ENCODE measurements at regions of chr16 and their contacts with region 1.

Region 1: DNA sequence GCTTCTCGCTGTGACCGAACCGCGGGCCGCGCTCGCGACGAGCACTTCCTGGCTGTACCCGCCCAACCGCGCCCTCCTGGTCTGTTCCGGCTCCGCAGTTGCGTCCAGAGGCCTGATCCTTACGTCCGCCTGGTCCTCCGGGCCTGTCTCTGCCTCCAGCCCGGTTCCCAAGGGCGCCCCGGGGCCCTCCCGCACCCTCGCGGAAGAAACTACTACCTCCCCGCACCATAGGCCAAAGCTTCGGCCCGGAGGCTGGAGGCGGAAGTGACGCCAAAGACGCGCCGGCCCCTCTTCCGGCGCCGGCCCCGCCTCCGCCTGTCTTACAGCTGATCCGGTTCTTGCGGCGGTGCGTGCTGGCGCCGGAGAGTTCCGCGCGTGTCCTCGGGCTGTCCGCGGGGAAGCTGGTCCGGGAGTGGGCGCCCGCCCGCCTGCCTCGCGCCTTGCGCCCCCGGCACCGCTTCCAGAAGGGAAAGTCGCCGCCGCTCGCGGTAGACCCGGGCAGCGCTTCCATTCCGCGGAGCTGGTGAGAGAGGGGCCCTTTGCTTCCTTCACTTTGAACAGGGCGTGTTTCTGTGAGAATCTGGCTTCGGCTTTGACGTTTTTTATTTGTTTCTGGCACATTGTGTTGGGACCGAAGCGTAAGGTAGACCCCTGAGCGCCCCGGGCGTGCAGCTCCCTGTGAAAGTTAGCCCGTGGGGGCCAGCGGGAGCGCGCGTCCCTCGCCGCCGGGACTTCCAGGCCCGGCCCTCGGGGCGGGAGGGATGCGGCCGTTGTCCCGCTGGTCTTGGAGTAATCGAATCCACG is at the start of gene ZNF778:
- DNase-seq: peak; percentile 91
- H3K4me3 ChIP-seq: peak within 1 kb of the TSS; percentile 69 to 99 (median 86)
- H3K27ac ChIP-seq: peak within 1 kb of the TSS; percentile 96 to 98 (median 96)
- H3K4me1 ChIP-seq: peaks cover 0 to 33% (median 31%) of the 10 kb centered on the region in 4 donors
- H3K27me3 ChIP-seq: no peaks in the 10 kb centered on the region
- CTCF ChIP-seq: no peak
- EP300 ChIP-seq: no peak
- POLR2A ChIP-seq: peak; percentile 32 to 66
- total RNA-seq, gene ZNF778: 6.4 to 21.8 (median 12.6) TPM

Region 2: GRCh38 chr16:87950765-87951549 is 1266.6 kb before region 1 on chr16 and contains the start of gene BANP:
- intact Hi-C with region 1: loop called (anchors 10 kb)
- DNase-seq: peak; percentile 99
- H3K4me3 ChIP-seq: peak within 1 kb of the TSS; percentile 83 to 99 (median 95)
- H3K27ac ChIP-seq: peak within 1 kb of the TSS; percentile 94 to 100 (median 97)
- H3K4me1 ChIP-seq: peaks cover 0 to 44% (median 25%) of the 10 kb centered on the region in 4 donors
- H3K27me3 ChIP-seq: no peaks in the 10 kb centered on the region
- CTCF ChIP-seq: peak in 3 of 4 experiments; percentile 29 to 37 (median 36)
- EP300 ChIP-seq: no peak
- POLR2A ChIP-seq: no peak
- total RNA-seq, gene BANP: 17.4 to 31.0 (median 23.0) TPM

Region 3: DNA sequence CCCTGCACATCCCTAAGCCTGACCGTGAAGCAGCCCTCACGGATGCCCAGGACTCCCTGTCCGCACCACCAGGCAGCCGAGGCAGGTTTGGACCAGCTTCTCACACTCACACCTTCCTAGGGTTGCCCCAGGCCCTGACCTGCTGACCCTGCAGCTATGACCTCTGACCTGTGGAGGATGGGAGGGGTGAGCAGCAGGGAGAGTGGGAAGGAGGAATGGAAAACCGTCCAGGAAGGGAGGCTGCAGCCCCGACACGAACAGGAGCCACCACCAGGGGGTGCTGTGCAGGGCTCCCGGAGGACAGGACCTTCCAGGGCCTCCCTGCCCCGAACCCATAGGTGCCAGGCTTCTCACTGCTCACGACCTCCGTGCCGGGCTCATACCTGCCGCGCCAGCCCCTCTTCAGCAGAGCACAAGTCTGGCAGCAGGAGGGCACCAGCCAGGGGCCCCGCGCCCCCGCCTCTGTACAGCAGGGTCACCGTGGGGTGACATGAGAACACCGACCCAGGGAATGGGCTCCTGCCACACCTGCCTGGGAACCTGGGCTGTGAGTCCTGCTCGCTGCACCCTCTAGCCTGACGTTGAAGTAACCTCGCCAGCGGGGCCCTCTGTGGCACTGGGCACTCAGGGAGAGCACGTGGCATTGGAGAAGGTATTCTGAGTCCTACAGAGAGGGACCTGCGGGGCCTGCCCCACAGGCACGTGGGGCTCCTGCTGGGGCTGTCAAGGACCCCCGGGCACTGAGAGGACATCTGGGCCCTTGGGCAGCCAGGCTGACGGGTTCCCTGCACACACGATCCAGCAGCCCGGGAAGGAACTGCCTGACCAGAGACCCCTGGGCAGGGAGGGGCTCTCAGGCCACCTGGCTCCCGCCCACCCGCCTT is 473.7 kb before region 1 on chr16:
- intact Hi-C with region 1: loop called (anchors 10 kb)
- DNase-seq: peak; percentile 91
- H3K4me3 ChIP-seq: no peak overlapping the region
- H3K27ac ChIP-seq: peak overlapping the region; percentile 38 to 87 (median 82)
- H3K4me1 ChIP-seq: peaks cover 0 to 52% (median 43%) of the 10 kb centered on the region in 4 donors
- H3K27me3 ChIP-seq: no peaks in the 10 kb centered on the region
- CTCF ChIP-seq: peak; percentile 85 to 95 (median 92)
- EP300 ChIP-seq: no peak
- POLR2A ChIP-seq: no peak

Region 4: GRCh38 chr16:88838991-88839529 is 378.5 kb before region 1 on chr16:
- intact Hi-C with region 1: no loop called
- DNase-seq: no peak
- H3K4me3 ChIP-seq: no peak overlapping the region
- H3K27ac ChIP-seq: no peak overlapping the region
- H3K4me1 ChIP-seq: no peaks in the 10 kb centered on the region
- H3K27me3 ChIP-seq: no peaks in the 10 kb centered on the region
- CTCF ChIP-seq: no peak
- EP300 ChIP-seq: no peak
- POLR2A ChIP-seq: no peak

Region 5: GRCh38 chr16:88856828-88857733 is 360.5 kb before region 1 on chr16 and contains the starts of genes GALNS and TRAPPC2L:
- intact Hi-C with region 1: loop called (anchors 5 kb)
- DNase-seq: peak; percentile 99
- H3K4me3 ChIP-seq: peak within 1 kb of the TSS; percentile 70 to 95 (median 80)
- H3K27ac ChIP-seq: peak within 1 kb of the TSS; percentile 77 to 88 (median 82)
- H3K4me1 ChIP-seq: peaks cover 0 to 27% (median 20%) of the 10 kb centered on the region in 4 donors
- H3K27me3 ChIP-seq: no peaks in the 10 kb centered on the region
- CTCF ChIP-seq: no peak
- EP300 ChIP-seq: no peak
- POLR2A ChIP-seq: peak; percentile 25 to 65
- total RNA-seq, gene GALNS: 6.7 to 50.4 (median 11.4) TPM
- total RNA-seq, gene TRAPPC2L: 30.7 to 42.1 (median 39.3) TPM

Region 6: DNA sequence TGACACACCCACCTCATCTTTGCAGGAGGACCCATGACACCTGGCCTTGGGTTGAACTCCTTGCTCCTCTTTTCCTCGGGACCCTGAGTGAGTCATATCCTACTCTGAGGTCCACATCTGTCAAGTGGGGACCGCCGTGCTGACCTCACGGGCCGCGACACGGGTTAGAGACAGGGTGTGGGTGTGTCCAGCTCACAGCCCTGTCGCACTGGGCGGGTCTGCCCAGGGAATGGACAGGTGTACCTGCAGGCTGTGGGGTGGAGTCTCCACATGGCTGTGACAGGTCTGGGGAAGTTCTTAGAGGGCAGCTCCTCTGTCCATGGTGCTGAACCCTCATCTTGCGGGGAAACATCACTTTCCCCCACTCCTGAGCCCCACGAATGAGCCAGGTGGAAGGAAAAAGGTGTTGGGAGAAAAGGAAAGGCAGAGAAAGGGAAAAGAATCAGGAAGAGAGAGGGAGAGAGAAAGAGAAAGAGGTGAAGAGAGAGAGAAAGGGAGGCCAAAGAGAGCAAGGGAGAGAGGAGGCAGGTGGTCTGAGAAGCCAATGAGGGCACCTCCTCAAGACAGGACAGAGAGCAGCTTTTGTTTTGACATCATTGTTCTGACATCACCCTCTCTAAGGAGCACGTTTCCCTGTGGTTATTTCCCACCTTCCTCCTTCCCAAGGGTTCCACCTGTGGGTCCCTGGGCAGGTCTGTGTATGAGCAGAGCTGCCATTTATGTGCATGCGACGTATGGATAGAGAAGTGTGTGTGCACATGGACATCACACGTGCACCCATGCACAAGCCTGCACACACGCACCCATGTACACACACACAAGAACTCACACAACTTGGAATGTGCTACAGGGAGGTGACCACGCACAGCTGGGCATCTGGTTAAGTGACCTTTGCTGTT is 208.0 kb before region 1 on chr16:
- intact Hi-C with region 1: no loop called
- DNase-seq: peak; percentile 58
- H3K4me3 ChIP-seq: no peak overlapping the region
- H3K27ac ChIP-seq: no peak overlapping the region
- H3K4me1 ChIP-seq: no peaks in the 10 kb centered on the region
- H3K27me3 ChIP-seq: peaks cover 0 to 59% (median 21%) of the 10 kb centered on the region in 3 donors
- CTCF ChIP-seq: no peak
- EP300 ChIP-seq: no peak
- POLR2A ChIP-seq: no peak

Region 7: DNA sequence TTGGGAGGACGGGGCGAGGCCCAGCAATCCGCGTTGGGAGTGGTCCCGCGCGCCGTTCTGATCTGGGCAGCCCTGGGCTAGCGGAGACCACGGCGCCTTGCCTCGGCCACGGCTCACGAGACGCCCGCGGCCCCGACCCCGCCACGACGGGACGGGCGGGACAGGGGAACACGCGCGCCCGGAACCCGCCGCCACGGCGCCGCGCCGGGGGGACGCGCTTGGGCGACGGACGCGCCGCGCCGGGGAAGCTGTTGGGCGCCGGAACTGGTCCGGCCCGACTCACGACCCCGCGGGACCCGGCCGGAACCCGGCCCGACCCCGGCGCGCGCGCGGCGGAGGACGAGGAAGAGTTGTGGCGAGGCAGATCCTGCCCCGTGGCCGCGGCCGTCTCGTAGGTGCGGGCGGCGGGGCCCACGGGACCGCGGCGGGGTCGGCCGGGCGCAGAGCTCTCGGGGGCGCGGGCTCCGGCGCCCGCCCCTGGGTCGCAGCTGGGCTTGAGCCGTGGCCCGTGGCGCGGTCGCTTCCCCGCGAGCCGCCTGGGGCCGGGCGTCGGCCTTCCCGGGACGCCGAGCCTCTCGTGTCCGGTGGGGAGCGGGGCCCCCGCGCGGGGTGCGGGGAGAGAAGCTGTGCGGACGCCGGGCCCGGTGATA is 123.9 kb before region 1 on chr16 and contains the start of gene ACSF3:
- intact Hi-C with region 1: loop called (anchors 5 kb)
- DNase-seq: peak; percentile 76
- H3K4me3 ChIP-seq: peak within 1 kb of the TSS; percentile 52 to 86 (median 82)
- H3K27ac ChIP-seq: peak within 1 kb of the TSS; percentile 62 to 80 (median 68)
- H3K4me1 ChIP-seq: peaks cover 0 to 32% (median 25%) of the 10 kb centered on the region in 4 donors
- H3K27me3 ChIP-seq: peaks cover 0 to 28% (median 27%) of the 10 kb centered on the region in 3 donors
- CTCF ChIP-seq: no peak
- EP300 ChIP-seq: no peak
- POLR2A ChIP-seq: no peak
- total RNA-seq, gene ACSF3: 19.7 to 31.6 (median 24.8) TPM